Activated CD8-positive, alpha-beta T cell treated with anti-CD3 and anti-CD28 coated beads for 36 hours (primary cell): ENCODE measurements at regions of chr13 and their contacts with region 1.

Region 1: GRCh38 chr13:20160847-20161274 is at the start of gene GJA3:
- DNase-seq: peak; percentile 71
- ATAC-seq: peak; percentile 56
- H3K4me3 Mint-ChIP-seq: peak within 1 kb of the TSS; percentile 75
- H3K27ac Mint-ChIP-seq: peak within 1 kb of the TSS; percentile 55
- H3K4me1 Mint-ChIP-seq: peaks cover 12% of the 10 kb centered on the region
- H3K27me3 Mint-ChIP-seq: peaks cover 25% of the 10 kb centered on the region
- CTCF ChIP-seq: no peak
- total RNA-seq, gene GJA3: 0.32 to 0.51 TPM

Region 2: DNA sequence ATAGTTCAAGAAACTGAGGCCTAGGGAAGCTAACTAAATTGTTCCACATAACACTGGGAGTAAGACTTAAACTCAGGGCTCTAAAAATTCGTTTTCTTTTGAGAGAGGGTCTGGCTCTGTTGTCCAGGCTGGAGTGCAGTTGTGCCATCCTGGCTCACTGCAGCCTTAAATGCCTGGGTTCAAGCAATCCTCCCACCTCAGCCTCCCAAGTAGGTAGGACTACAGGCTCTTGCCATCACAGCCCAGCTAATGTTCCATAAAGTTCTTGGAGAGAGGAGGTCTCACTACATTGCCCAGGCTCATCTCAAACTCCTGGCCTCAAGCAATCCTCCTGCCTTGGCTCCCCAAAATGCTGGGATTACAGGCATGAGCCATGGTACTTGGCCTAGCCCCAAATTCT is 308.1 kb before region 1 on chr13:
- CTCF ChIA-PET with region 1: no interaction called
- POLR2A ChIA-PET with region 1: no interaction called
- intact Hi-C with region 1: no loop called
- DNase-seq: no peak
- ATAC-seq: no peak
- H3K4me3 Mint-ChIP-seq: no peak overlapping the region
- H3K27ac Mint-ChIP-seq: no peak overlapping the region
- H3K4me1 Mint-ChIP-seq: peaks cover 28% of the 10 kb centered on the region
- H3K27me3 Mint-ChIP-seq: no peaks in the 10 kb centered on the region
- CTCF ChIP-seq: no peak

Region 3: GRCh38 chr13:19984430-19985218 is 176.2 kb before region 1 on chr13:
- CTCF ChIA-PET with region 1: interaction called, 7 read pairs
- POLR2A ChIA-PET with region 1: no interaction called
- intact Hi-C with region 1: loop called (anchors 10 kb)
- DNase-seq: no peak
- ATAC-seq: peak; percentile 78
- H3K4me3 Mint-ChIP-seq: no peak overlapping the region
- H3K27ac Mint-ChIP-seq: peak overlapping the region; percentile 30
- H3K4me1 Mint-ChIP-seq: peaks cover 39% of the 10 kb centered on the region
- H3K27me3 Mint-ChIP-seq: no peaks in the 10 kb centered on the region
- CTCF ChIP-seq: peak; percentile 36

Region 4: DNA sequence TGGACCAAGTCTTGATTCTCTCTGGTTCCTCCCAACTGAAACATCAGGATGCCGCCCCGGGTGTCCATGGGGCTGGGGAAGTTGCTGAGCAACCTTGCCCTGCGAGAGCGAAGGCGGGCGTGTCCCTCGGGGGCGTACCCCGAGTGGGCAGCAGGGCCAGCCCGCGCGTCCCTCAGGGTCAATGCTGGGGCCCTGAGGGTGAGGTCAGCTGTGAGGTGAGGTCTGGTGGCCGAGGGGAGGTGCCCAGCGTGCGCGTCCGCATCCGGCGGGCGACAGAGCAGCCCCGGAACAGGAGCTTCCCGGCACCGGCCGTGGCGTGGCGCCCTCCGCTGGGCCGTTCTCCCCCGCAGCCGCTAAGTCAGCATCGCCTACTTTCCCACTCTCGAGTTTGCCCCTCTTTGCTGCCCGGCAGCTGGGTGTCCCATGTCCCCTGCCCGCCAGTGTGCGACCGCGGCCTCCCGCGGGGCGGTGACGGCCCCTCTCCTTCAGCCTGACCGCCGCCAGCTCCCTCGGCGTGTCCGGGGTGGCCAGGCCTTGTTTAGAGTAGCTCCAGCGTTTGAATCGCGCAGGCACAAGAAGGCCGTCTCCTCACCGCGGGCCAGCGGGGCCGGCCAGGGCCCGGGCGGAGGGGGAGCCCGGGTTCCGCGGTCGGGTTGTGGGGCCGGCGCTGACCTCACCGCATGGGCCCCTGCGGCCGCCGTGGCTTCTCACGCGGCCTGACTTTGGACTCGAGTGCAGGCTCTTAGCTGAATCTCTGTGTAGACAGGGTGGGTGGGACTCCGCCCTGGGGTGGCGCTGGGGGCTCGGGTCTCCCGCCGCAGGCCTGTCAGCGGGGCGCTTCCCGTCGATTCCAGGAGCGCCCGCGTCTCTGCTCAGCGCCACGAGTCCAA is 33.0 kb before region 1 on chr13:
- CTCF ChIA-PET with region 1: interaction called, 14 read pairs
- POLR2A ChIA-PET with region 1: no interaction called
- intact Hi-C with region 1: loop called (anchors 5 kb)
- DNase-seq: peak; percentile 58
- ATAC-seq: peak; percentile 75
- H3K4me3 Mint-ChIP-seq: peak overlapping the region; percentile 65
- H3K27ac Mint-ChIP-seq: no peak overlapping the region
- H3K4me1 Mint-ChIP-seq: no peaks in the 10 kb centered on the region
- H3K27me3 Mint-ChIP-seq: peaks cover 16% of the 10 kb centered on the region
- CTCF ChIP-seq: peak; percentile 30

Region 5: GRCh38 chr13:20378721-20379120 is 217.9 kb after region 1 on chr13:
- CTCF ChIA-PET with region 1: no interaction called
- POLR2A ChIA-PET with region 1: no interaction called
- intact Hi-C with region 1: no loop called
- DNase-seq: no peak
- ATAC-seq: no peak
- H3K4me3 Mint-ChIP-seq: no peak overlapping the region
- H3K27ac Mint-ChIP-seq: no peak overlapping the region
- H3K4me1 Mint-ChIP-seq: no peaks in the 10 kb centered on the region
- H3K27me3 Mint-ChIP-seq: no peaks in the 10 kb centered on the region
- CTCF ChIP-seq: no peak